MCF 10A (cell line): ENCODE measurements at regions of chr16 and their contacts with region 1.

Region 1: DNA sequence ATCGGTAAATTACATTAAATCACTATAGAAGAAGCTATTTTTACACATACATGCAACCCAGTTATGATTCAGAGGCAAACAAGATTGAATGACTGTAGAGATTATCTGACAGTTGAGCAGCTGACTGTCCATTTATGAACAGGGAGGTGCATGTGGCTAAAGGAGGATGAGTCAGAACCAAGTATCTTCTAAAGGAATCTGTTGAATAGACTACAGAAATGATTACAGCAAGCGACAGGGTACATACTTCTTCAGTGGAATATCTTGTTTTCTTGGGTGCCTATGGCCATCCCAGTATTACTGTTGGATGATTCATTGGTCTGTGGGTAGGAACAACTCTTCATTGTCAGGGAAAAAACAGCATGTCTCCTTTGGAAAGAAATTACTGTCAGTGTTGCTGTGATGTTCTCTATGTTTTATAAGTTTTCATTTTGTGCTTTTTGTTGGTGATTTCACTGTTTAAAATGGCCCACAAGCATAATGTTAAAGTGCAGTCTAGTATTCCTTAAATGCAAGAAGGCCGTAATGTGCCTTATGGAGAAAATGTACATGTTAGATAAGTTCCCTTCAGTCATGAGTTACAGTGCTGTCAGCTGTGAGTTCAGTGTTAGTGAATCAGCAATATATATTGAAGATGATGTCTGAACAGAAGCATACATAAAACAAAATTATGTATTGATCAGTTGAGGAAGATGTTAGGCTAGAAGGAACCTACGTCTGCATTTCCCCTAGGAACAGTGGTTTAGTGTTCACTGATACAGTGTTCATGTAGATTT is 27.0 kb downstream of the CBFB start:
- DNase-seq: peak; percentile 81
- H3K4me3 Mint-ChIP-seq: peak overlapping the region; percentile 11
- H3K27ac Mint-ChIP-seq: peak overlapping the region; percentile 81
- H3K4me1 Mint-ChIP-seq: peaks cover 11% of the 10 kb centered on the region
- H3K27me3 Mint-ChIP-seq: no peaks in the 10 kb centered on the region
- CTCF ChIP-seq: no peak

Region 2: DNA sequence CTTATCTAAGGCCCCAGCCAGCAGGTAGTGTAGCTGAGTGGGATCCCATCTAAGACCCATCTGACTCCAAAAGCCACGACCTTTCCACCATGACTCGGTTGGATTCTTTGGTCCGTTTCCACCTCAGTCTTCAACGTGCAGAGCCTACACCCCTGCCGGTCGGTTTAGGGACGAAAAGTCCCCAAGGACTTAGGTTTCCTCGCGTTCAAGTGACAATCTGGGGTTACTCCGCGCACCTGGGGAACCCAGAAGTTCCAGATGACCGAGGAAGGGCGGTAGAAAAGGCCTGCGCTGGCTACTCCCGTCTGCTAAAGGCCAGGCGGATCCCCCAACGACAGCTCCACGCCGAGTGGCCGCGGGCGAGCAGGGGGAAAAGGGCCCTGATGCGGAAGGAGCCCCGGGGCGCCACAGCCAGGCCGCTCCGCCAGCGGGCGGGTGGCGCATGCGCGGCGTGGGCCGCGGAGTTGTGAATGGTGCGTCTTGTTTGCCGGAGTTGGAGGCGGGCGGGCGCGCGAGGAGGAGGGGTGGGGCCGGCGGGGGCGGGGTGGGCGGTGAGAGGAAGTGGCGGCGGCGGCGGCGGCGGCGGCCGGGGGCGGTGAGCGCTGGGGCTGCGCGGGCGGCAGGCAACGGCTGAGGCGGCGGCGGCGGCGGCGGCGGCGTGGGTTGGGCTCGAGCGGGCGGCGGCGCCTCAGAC is 27.2 kb before region 1 on chr16 and contains the start of gene CBFB:
- CTCF ChIA-PET with region 1: no interaction called
- POLR2A ChIA-PET with region 1: interaction called, 37 read pairs
- intact Hi-C with region 1: no loop called
- DNase-seq: peak; percentile 87
- H3K4me3 Mint-ChIP-seq: peak within 1 kb of the TSS; percentile 76
- H3K27ac Mint-ChIP-seq: peak within 1 kb of the TSS; percentile 35
- H3K4me1 Mint-ChIP-seq: no peaks in the 10 kb centered on the region
- H3K27me3 Mint-ChIP-seq: no peaks in the 10 kb centered on the region
- CTCF ChIP-seq: no peak
- total RNA-seq, gene CBFB: 87.1 and 105 TPM in 2 replicates

Region 3: DNA sequence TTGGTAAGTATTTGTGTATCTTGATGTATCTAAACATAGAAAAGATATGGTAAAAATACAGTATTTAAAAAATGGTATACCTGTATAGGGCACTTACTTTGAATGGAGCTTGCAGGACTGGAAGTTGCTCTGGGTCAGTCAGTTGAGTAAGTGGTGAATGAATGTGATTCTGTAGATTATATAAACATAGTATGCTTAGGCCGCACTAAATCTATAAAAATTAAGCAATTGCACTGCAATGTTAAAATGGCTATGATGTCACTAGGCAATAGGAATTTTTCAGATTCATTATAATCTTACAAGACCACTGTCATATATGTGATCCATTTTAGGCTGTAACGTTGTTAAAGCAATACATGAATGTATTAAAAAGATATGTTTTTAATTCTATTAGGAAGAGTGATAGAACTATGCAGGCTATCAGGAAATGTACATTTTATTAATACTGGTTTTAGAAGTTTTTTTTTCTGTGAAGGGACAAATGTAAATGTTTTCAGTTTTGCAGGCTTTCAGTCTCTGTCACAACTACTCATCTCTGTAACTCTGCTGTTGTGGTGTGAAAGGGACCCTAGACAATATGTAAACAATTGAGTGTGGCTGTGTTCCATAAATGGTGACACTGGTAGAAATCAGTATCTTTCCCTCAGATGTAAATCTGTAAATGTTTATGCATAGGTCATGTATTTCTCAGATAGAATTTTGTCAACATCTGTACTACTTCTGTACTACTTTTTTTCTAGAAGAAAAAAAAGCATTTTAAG is 16.5 kb before region 1 on chr16:
- CTCF ChIA-PET with region 1: interaction called, 5 read pairs
- POLR2A ChIA-PET with region 1: interaction called, 22 read pairs
- intact Hi-C with region 1: no loop called
- DNase-seq: no peak
- H3K4me3 Mint-ChIP-seq: no peak overlapping the region
- H3K27ac Mint-ChIP-seq: no peak overlapping the region
- H3K4me1 Mint-ChIP-seq: peaks cover 8% of the 10 kb centered on the region
- H3K27me3 Mint-ChIP-seq: no peaks in the 10 kb centered on the region
- CTCF ChIP-seq: no peak